CD8-positive, alpha-beta memory T cell (primary cell): ENCODE measurements at regions of chr1 and their contacts with region 1.

Region 1: DNA sequence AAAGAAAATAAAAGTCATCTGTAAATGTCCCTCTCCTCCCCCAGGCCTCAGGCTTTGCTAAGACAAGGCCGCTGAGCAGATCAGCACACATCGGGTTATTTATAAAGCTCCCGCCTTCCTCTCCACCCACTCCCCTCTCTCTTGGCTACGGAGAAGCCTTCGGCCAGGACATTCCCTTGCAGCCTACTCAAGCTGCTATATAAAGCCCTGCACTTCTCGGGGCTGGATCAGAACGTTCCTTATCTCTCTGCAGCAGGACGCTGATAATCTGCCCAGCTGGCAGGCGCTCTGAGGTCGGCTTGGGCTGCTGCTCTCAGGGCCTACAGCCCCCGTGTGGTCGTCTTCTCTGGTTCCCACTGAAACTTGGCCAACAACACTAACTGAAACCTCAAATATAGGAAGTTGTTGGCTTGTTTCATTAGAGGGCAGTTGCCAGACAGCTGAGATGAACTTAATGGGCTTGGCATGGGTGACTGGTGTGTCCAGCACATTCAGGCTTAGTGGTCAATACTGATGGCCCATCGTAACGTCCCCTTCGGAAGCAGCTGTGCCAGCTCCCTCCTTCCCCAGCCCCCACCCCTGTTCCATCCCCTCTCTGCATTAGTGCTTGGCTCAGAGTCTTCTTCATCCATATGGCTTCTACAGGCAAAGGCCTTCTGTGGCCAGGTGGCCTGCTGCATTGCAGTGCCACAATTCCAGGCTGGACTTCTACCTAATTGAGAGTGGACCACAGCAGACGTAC is 64.6 kb downstream of the IER5 start:
- DNase-seq: no peak
- H3K4me3 ChIP-seq: no peak overlapping the region
- H3K4me3 Mint-ChIP-seq: no peak overlapping the region
- H3K27ac ChIP-seq: peak overlapping the region; percentile 44
- H3K27ac Mint-ChIP-seq: no peak overlapping the region
- H3K4me1 ChIP-seq: peaks cover 56% of the 10 kb centered on the region
- H3K4me1 Mint-ChIP-seq: peaks cover 43 to 59% (median 52%) of the 10 kb centered on the region in 3 donors
- H3K27me3 ChIP-seq: no peaks in the 10 kb centered on the region
- H3K27me3 Mint-ChIP-seq: no peaks in the 10 kb centered on the region

Region 2: DNA sequence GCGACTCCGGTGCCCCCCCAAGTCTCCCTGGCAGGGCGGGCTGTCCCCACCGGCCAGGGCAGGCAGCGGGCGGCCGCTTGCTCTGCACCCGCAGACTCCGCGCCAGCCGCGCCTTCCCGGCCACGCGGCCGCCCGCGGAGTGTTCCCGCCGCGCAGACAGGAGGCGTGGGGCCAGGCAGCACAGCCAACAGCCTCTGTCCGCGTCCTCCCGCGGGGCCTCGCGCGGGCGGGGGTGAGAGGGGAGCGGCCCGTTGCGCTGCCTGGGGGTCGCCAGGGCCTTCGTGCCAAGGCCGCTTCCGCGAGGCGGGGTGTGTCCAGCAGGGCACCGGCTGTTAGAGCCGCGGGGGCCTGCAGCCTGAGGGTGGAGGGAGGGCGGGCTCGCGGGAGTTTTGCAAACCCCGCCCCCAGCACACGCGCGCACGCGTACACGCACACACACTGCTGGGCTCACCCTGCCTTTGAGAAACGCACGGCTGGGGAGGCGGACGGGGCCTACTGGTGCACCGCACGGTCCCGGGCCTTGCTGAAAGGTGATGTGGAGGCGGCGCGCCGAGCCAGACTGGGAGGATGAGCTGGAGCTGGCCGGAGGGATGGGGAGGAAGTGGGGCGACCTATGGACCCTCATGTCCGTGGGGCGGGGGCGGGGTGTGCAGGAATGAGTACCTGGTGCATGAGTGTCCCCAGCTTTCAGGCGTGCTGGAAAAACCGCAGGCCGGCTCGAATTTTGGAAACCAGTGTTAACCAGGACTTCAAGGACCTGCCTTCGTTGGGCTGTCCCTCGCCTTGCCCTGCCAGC is 198.9 kb before region 1 on chr1:
- CTCF ChIA-PET with region 1: no interaction called
- POLR2A ChIA-PET with region 1: no interaction called
- DNase-seq: peak; percentile 50 to 77 (median 51)
- H3K4me3 ChIP-seq: peak overlapping the region; percentile 39
- H3K4me3 Mint-ChIP-seq: peak overlapping the region; percentile 53 to 90 (median 73)
- H3K27ac ChIP-seq: no peak overlapping the region
- H3K27ac Mint-ChIP-seq: peak overlapping the region in 5 of 8 donors; percentile 37 to 93 (median 39)
- H3K4me1 ChIP-seq: peaks cover 4% of the 10 kb centered on the region
- H3K4me1 Mint-ChIP-seq: peaks cover 0 to 11% (median 11%) of the 10 kb centered on the region in 3 donors
- H3K27me3 ChIP-seq: no peaks in the 10 kb centered on the region
- H3K27me3 Mint-ChIP-seq: no peaks in the 10 kb centered on the region

Region 3: DNA sequence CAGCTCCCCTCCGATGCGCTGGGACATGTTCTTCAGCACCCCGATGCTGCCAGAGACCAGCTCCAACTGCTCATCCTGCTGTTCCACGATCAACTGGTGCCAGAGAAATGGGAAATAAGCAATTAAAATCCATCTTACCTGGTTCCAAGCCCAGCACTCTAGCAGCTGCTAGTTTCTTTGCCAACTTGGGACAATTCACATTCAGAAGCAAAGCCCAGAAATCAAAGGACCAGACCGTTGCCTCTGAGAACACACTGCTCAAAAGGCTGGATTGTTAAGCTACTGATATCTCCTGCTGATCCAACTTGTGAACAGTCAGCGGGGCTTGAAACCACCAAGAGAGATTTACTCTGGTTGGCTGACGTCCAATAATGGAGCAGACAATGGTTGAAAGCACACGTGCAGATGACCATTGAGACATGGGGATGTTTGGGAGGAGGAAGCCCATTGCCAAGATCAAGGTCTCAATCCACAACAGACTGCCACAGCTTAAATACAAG is 164.8 kb before region 1 on chr1:
- CTCF ChIA-PET with region 1: no interaction called
- POLR2A ChIA-PET with region 1: no interaction called
- DNase-seq: no peak
- H3K4me3 ChIP-seq: no peak overlapping the region
- H3K4me3 Mint-ChIP-seq: no peak overlapping the region
- H3K27ac ChIP-seq: no peak overlapping the region
- H3K27ac Mint-ChIP-seq: peak overlapping the region in 1 of 8 donors; percentile 64
- H3K4me1 ChIP-seq: no peaks in the 10 kb centered on the region
- H3K4me1 Mint-ChIP-seq: peaks cover 0 to 3% (median 2%) of the 10 kb centered on the region in 3 donors
- H3K27me3 ChIP-seq: no peaks in the 10 kb centered on the region
- H3K27me3 Mint-ChIP-seq: no peaks in the 10 kb centered on the region

Region 4: DNA sequence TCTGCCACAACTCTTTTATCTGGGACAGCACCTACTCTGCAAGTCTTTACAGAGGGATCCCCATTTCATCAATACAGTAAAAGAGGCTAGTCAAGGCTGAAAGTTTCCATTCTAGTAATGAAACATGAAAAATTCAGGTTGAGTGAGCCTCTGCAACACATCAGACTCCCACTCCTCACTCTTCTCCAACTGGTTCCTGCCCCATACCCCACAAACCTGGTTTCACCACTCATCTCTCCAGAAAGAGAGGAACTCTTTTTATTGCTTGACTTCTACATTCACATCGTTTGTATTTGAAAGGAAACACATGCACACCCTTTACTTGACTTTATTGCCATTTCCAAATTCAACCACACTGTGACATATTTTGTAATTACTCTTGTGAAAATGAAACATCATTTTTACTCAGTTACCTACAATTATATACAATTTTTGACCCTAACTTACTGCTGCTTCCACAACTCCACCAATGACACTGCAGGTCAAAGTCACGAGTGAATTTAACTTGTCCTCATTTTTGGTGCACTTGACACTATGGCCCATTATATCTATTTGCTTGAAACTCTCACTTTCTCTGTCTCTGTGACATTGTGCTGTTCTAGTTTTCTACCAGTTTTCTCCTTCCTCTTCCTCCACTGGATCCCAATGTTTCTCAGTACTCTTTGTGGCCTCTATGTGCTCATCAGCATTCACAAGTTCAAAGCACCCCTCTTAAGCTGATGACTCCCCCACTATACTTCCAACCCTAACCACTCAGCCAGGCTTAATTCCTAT is 138.4 kb before region 1 on chr1:
- CTCF ChIA-PET with region 1: no interaction called
- POLR2A ChIA-PET with region 1: no interaction called
- DNase-seq: no peak
- H3K4me3 ChIP-seq: no peak overlapping the region
- H3K4me3 Mint-ChIP-seq: no peak overlapping the region
- H3K27ac ChIP-seq: no peak overlapping the region
- H3K27ac Mint-ChIP-seq: no peak overlapping the region
- H3K4me1 ChIP-seq: peaks cover 25% of the 10 kb centered on the region
- H3K4me1 Mint-ChIP-seq: peaks cover 48 to 56% (median 50%) of the 10 kb centered on the region in 3 donors
- H3K27me3 ChIP-seq: no peaks in the 10 kb centered on the region
- H3K27me3 Mint-ChIP-seq: no peaks in the 10 kb centered on the region

Region 5: GRCh38 chr1:181099152-181100014 is 53.7 kb before region 1 on chr1:
- CTCF ChIA-PET with region 1: no interaction called
- POLR2A ChIA-PET with region 1: interaction called, 12 read pairs
- DNase-seq: no peak
- H3K4me3 ChIP-seq: no peak overlapping the region
- H3K4me3 Mint-ChIP-seq: peak overlapping the region in 2 of 7 donors; percentile 1 to 12
- H3K27ac ChIP-seq: no peak overlapping the region
- H3K27ac Mint-ChIP-seq: peak overlapping the region; percentile 3 to 62 (median 36)
- H3K4me1 ChIP-seq: peaks cover 33% of the 10 kb centered on the region
- H3K4me1 Mint-ChIP-seq: peaks cover 30 to 54% (median 41%) of the 10 kb centered on the region in 3 donors
- H3K27me3 ChIP-seq: no peaks in the 10 kb centered on the region
- H3K27me3 Mint-ChIP-seq: no peaks in the 10 kb centered on the region

Region 6: DNA sequence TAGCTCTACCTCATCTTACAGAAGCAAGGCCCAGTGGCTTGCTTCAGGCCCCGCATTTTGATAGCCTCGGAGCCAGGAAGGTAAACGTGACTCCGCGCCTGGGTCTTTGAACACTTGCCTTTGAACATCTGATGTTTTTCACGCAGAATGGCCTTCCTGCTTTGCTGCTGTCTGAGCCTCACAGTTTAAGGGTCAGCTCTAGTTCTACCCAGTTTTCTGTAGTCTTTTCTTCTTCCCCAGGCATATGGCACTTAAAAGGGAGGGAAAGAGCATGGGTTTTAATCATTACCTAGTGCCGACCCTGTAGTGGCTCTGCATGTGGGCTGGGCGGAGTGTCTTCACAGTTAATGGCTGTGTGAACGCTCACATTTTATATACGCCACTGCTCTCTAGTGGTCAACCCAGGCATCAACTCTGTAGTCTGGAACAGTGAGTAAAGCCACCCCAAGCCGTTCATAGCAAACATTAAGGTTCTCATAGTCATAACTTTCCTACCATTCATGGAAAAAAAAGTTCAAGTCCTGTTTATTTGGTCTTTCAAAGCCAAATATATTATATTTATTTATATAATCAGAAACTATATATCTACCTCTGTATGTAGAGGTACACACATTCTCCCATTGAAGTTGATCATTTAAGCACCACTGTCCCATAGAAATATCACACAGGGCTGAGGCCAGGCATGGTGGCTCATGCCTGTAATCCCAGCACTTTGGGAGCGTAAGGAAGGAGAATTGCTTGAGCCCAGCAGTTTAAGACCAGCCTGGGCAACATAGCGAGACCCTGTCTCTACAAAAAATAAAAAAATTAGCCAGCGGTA is 13.5 kb after region 1 on chr1:
- CTCF ChIA-PET with region 1: interaction called, 12 read pairs
- POLR2A ChIA-PET with region 1: interaction called, 4 read pairs
- DNase-seq: peak; percentile 46 to 79 (median 68)
- H3K4me3 ChIP-seq: peak overlapping the region; percentile 16
- H3K4me3 Mint-ChIP-seq: peak overlapping the region in 5 of 7 donors; percentile 55 to 69 (median 58)
- H3K27ac ChIP-seq: no peak overlapping the region
- H3K27ac Mint-ChIP-seq: peak overlapping the region in 5 of 8 donors; percentile 3 to 80 (median 50)
- H3K4me1 ChIP-seq: peaks cover 7% of the 10 kb centered on the region
- H3K4me1 Mint-ChIP-seq: peaks cover 5 to 6% (median 5%) of the 10 kb centered on the region in 3 donors
- H3K27me3 ChIP-seq: no peaks in the 10 kb centered on the region
- H3K27me3 Mint-ChIP-seq: no peaks in the 10 kb centered on the region